Activated CD4-positive, alpha-beta T cell treated with anti-CD3 and anti-CD28 coated beads for 36 hours (primary cell): ENCODE measurements at regions of chr16 and their contacts with region 1.

Region 1: GRCh38 chr16:2768403-2769089 is 8.5 kb downstream of the ELOB start:
- DNase-seq: no peak
- ATAC-seq: no peak
- H3K4me3 Mint-ChIP-seq: no peak overlapping the region
- H3K27ac Mint-ChIP-seq: no peak overlapping the region
- H3K4me1 Mint-ChIP-seq: peaks cover 7% of the 10 kb centered on the region
- H3K27me3 Mint-ChIP-seq: no peaks in the 10 kb centered on the region

Region 2: GRCh38 chr16:2757344-2757743 is 11.2 kb before region 1 on chr16:
- CTCF ChIA-PET with region 1: interaction called, 3 read pairs
- POLR2A ChIA-PET with region 1: interaction called, 26 read pairs
- intact Hi-C with region 1: no loop called
- DNase-seq: no peak
- ATAC-seq: no peak
- H3K4me3 Mint-ChIP-seq: no peak overlapping the region
- H3K27ac Mint-ChIP-seq: peak overlapping the region; percentile 53
- H3K4me1 Mint-ChIP-seq: peaks cover 47% of the 10 kb centered on the region
- H3K27me3 Mint-ChIP-seq: no peaks in the 10 kb centered on the region

Region 3: DNA sequence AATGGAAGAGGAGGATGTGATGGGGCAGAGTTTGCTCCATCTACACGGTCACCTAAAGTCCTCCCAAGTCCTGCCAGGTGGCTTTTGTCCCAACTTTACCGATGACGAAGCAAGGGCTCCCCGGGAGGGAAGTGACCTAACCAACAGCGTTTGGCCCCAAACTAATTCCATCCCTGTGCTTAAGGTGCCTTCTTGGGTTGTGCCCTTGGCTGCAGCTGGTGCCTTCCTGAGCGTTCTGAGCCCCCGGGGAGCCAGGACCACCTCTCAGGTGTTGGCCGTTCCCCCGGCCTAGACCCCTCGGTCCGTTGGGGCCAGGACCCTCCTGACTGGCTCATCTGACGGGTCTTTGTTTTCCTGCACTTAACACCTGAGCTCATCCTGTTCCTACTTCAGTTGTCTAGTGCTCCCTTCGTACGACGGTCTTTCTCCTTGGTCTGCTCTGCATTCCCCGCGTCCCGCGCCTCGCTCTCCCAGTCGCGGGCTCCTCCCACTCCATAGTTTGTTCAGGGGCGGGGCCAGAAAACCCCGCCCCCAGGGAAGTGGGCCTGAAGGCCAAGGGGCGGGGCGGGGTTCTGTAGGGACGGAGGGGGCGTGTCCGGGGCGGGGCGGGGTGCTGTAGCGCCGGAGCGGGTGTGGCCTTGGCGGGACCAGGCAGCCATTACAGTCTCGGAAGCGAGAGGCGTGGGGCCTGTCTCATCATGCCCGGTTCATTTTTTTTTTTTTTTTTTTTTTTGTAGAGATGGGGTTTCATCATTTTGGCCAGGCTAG is 331.4 kb after region 1 on chr16:
- CTCF ChIA-PET with region 1: no interaction called
- POLR2A ChIA-PET with region 1: no interaction called
- intact Hi-C with region 1: no loop called
- DNase-seq: peak; percentile 99
- ATAC-seq: peak; percentile 84
- H3K4me3 Mint-ChIP-seq: peak overlapping the region; percentile 68
- H3K27ac Mint-ChIP-seq: peak overlapping the region; percentile 84
- H3K4me1 Mint-ChIP-seq: peaks cover 49% of the 10 kb centered on the region
- H3K27me3 Mint-ChIP-seq: no peaks in the 10 kb centered on the region